ENCODE measurements at regions of chr17 and their contacts with region 1.

Region 1: GRCh38 chr17:4554997-4555799 is at the start of gene MYBBP1A:
- DNase-seq: peak; percentile 94 to 98 (median 97)
- H3K4me3 ChIP-seq: peak within 1 kb of the TSS; percentile 75
- H3K4me3 Mint-ChIP-seq: peak within 1 kb of the TSS; percentile 83 to 97 (median 96)
- H3K27ac ChIP-seq: peak within 1 kb of the TSS; percentile 59
- H3K27ac Mint-ChIP-seq: peak within 1 kb of the TSS; percentile 65 to 99 (median 97)
- H3K4me1 ChIP-seq: peaks cover 21% of the 10 kb centered on the region
- H3K4me1 Mint-ChIP-seq: peaks cover 27 to 32% (median 30%) of the 10 kb centered on the region in 3 donors
- H3K27me3 ChIP-seq: no peaks in the 10 kb centered on the region
- H3K27me3 Mint-ChIP-seq: no peaks in the 10 kb centered on the region
- total RNA-seq, gene MYBBP1A: 148 to 157 TPM

Region 2: DNA sequence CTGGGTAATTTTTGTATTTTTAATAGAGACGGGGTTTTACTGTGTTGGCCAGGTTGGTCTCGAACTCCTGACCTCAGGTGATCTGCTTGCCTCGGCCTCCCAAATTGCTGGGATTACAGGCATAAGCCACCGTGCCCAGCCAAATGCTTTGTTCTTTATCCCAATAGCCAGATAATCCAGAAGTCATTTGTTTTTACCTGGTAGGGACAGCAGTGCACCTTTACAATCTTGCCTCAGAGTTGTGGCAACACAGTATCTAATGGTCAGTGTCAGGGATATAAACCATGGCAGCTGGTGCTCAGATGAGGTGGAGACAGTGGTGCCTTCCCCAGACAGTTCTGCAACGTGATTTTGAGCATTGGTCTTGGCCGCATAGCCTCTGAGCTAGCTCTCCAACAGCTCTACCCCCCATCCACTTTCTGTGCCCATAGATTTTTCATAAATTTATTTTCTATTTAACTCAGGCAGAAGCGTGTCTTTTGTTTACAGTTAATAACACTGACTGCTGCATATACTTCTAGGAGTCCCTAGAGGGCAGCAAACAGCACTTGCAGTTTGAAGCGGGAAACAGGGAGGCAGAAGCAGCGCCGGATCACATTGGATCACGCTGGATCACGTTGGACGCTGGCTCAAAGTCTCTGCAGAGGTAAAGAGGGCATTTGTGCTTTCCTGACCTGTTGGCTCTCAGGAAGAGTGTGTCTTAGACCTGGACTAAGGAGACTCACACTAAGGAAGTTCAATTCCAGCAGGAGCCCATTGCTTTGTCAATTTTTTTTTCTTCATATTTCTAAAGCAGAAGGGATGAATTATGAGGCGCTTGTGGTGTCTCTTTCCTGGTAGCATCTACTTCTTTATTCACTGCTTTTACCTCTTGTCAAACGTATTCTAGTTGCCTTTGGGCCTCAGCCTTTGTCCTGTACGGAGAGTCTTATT is 10.3 kb after region 1 on chr17:
- CTCF ChIA-PET with region 1: interaction called, 18 read pairs
- POLR2A ChIA-PET with region 1: interaction called, 4 read pairs
- DNase-seq: peak; percentile 21 to 66 (median 39)
- H3K4me3 ChIP-seq: no peak overlapping the region
- H3K4me3 Mint-ChIP-seq: peak overlapping the region in 6 of 7 donors; percentile 41 to 76 (median 61)
- H3K27ac ChIP-seq: no peak overlapping the region
- H3K27ac Mint-ChIP-seq: peak overlapping the region in 3 of 8 donors; percentile 23 to 90 (median 26)
- H3K4me1 ChIP-seq: peaks cover 17% of the 10 kb centered on the region
- H3K4me1 Mint-ChIP-seq: peaks cover 14 to 28% (median 25%) of the 10 kb centered on the region in 3 donors
- H3K27me3 ChIP-seq: no peaks in the 10 kb centered on the region
- H3K27me3 Mint-ChIP-seq: peaks cover 3 to 5% of the 10 kb centered on the region in 2 donors

Measured in CD8-positive, alpha-beta memory T cell (primary cell).